AG04449 (cell line): ENCODE measurements at regions of chr22 and their contacts with region 1.

Region 1: GRCh38 chr22:26744892-26745808 is 87.8 kb downstream of the MIAT start:
- DNase-seq: no peak
- H3K4me3 ChIP-seq: no peak overlapping the region
- CTCF ChIP-seq: no peak

Region 2: GRCh38 chr22:26756675-26757293 is 11.6 kb after region 1 on chr22:
- CTCF ChIA-PET with region 1: interaction called, 35 read pairs
- POLR2A ChIA-PET with region 1: no interaction called
- DNase-seq: no peak
- H3K4me3 ChIP-seq: peak overlapping the region; percentile 43
- CTCF ChIP-seq: peak; percentile 87